Motor neuron (in vitro differentiated cells): ENCODE measurements at regions of chr17 and their contacts with region 1.

Region 1: DNA sequence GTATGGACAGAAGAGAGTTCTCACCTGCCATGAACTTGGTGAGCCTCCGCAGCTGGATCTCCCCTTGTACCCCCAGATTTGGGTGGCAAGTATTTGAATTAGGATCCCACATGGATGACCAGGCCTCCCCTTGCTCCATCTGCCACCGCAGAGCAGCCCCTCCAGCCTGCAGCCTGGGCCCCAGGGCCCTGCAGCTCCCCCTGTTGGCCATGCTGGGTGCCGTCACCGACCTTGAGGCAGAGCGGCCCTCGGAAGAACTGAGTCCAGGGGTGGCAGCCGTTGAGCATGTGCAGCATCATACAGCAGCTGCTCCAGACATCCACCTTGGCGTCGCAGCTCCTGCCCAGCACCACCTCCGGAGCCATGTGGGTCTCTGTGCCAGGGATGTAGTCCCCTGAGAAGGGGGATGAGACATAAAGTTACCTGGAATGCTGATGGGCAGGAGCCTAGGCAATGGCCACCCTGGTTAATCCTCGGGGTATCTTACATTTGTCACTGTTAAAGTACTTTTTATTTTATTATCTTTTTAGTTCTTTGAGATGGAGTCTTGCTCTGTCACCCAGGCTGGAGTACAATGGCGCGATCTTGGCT is 9.0 kb upstream of the SPATA32 start:
- ATAC-seq: peak in 2 of 8 experiments; percentile 16 to 60
- H3K4me3 ChIP-seq: no peak overlapping the region
- H3K27ac ChIP-seq: no peak overlapping the region
- H3K4me1 ChIP-seq: no peaks in the 10 kb centered on the region

Region 2: DNA sequence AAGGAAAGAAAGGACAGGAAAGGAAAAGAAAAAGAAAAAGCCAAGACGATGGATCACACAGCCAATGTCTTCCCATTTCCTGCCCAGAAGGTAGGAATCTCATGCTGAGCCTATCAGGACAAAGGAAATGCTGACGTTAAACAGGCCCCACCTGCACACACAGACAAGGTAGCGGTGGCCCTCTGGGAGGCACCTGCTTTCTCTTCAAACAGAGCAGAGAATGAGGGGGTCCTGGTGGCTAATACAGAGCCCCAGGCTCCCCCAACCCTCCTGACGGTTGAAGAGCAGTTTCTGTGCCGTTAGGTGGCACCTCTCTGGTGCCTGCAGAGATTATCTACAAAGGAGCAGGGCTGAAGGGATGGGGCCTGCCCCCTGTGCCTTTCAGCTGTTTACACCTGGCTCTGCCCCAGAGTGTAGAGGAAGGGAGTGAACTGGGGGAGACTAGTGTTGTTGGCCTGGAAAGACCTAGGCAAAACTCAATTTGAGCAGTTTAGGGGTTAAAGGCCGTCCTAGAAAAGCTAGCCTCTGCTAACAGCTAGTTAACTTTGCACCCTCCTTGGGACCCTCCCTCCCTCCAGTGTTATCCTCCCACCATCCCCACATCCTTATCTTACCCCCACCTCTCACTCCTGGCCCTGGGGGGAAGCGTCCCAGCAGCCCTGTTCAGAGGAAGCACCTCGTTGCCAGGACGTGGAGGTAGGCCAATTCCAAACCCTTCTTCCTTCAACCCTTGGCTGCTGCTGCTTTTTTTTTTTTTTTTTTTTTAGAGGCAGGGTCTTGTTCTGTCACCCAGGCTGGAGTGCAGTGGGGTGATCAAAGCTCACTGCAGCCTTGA is 105.5 kb after region 1 on chr17:
- in situ Hi-C with region 1: loop called in 4 of 9 experiments (anchors 5 to 25 kb)
- ATAC-seq: no peak
- H3K4me3 ChIP-seq: no peak overlapping the region
- H3K27ac ChIP-seq: no peak overlapping the region
- H3K4me1 ChIP-seq: peaks cover 3% of the 10 kb centered on the region in 2 donors